Activated T-helper 1 cell treated with anti-CD3 and anti-CD28 coated beads, Interleukin-12 subunit alpha, Interleukin-12 subunit beta, Interleukin-2, Interleukin-4 antibody, amounts not matched to agents 30 ng/mL and 10 ng/mL and 1 ng/mL, durations not matched to agents 14 hours and 24 hours and 36 hours (primary cell): ENCODE measurements at regions of chr2 and their contacts with region 1.

Region 1: GRCh38 chr2:88874063-88874657 is 182.7 kb downstream of the RPIA start:
- DNase-seq: peak; percentile 31
- H3K4me3 Mint-ChIP-seq: no peak overlapping the region
- H3K27ac Mint-ChIP-seq: no peak overlapping the region
- H3K4me1 Mint-ChIP-seq: no peaks in the 10 kb centered on the region
- H3K27me3 Mint-ChIP-seq: peaks cover 17% of the 10 kb centered on the region

Region 2: DNA sequence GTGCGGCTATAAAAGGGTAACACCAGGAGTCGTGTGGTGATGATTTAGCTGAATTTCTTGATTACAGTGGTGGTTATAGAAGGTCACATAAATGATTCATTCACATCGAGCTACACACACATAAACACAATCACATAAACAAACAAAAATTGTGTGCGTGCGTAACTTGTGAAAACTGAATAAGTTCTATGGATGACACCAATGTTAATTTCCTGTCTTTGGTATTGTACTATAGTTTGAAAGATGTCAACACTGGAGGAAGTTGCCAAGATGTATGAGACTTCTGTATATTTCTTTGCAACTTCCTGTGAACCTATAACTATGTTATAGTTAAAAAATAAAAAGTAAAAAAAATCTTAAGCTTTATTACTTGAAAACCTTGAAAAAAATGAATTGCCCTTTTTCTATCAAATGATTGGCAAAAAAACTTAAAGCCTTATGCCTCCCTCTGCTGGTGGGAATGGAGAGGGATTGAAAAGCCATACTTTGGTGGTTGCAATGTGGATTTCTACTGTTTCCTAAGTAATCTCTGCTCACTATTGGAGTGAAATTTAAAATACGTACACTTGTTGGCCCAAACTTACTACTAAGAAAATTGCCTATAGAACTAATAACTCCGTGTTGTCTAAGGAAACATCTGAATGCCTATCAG is 45.1 kb after region 1 on chr2:
- intact Hi-C with region 1: loop called (anchors 1 kb)
- DNase-seq: no peak
- H3K4me3 Mint-ChIP-seq: no peak overlapping the region
- H3K27ac Mint-ChIP-seq: no peak overlapping the region
- H3K4me1 Mint-ChIP-seq: no peaks in the 10 kb centered on the region
- H3K27me3 Mint-ChIP-seq: peaks cover 21% of the 10 kb centered on the region